GM10248 (cell line): ENCODE measurements at regions of chr6 and their contacts with region 1.

Region 1: GRCh38 chr6:152532616-152533015 is 104.5 kb downstream of the SYNE1 start:
- DNase-seq: no peak
- CTCF ChIP-seq: no peak

Region 2: GRCh38 chr6:152552616-152553209 is 20.1 kb after region 1 on chr6:
- CTCF ChIA-PET with region 1: interaction called, 10 read pairs
- POLR2A ChIA-PET with region 1: no interaction called
- DNase-seq: peak; percentile 34
- CTCF ChIP-seq: peak; percentile 81

Region 3: DNA sequence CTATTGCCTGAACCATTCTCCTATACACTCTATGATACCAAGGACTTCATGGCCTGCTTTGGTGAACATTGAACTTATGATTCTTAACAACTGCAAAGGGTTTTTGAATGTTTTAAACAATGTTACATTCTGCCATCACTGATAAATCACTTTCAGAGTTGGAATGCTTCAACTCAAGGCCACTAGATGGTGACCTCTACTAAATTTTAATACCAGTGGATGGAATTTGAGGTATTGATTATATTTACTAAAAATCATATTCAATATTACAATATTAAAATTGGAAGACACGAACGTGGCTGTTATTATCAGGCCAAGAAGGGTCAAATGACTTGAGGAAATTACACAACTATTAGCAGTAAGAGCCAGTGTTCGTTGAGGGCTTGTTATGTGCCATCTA is 183.7 kb after region 1 on chr6:
- CTCF ChIA-PET with region 1: no interaction called
- POLR2A ChIA-PET with region 1: no interaction called
- DNase-seq: no peak
- CTCF ChIP-seq: no peak